WTC11 (cell line): ENCODE measurements at regions of chr6 and their contacts with region 1.

Region 1: DNA sequence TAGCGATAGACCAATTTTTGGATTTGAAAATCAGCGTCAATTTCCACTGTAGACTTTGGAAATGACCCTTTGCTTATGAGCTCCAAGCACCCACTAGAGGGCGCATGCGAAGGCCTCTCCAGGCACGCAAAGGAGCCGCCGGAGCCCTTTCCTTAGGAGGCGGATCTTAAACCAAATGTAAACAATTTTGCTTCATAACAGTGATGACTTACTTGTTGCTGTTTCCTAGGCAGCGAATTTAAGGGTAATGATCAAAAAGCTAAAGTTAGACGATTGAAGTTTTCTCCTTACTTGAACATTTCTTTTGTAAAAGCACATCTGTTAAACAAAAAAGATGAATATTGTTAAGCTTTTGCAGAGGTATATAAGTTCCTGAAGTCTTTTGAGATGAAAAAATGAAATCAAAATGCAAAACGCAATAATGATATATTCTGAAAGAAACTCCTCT is 29.2 kb upstream of the EXOC2 start:
- DNase-seq: peak; percentile 81
- ATAC-seq: peak; percentile 86
- H3K4me3 Mint-ChIP-seq: no peak overlapping the region
- H3K27ac Mint-ChIP-seq: no peak overlapping the region
- H3K4me1 Mint-ChIP-seq: peaks cover 11% of the 10 kb centered on the region
- H3K27me3 Mint-ChIP-seq: no peaks in the 10 kb centered on the region
- CTCF ChIP-seq: peak; percentile 78

Region 2: GRCh38 chr6:617445-618100 is 104.5 kb before region 1 on chr6:
- CTCF ChIA-PET with region 1: interaction called, 16 read pairs
- POLR2A ChIA-PET with region 1: no interaction called
- DNase-seq: peak; percentile 38
- ATAC-seq: peak; percentile 97
- H3K4me3 Mint-ChIP-seq: no peak overlapping the region
- H3K27ac Mint-ChIP-seq: no peak overlapping the region
- H3K4me1 Mint-ChIP-seq: peaks cover 7% of the 10 kb centered on the region
- H3K27me3 Mint-ChIP-seq: no peaks in the 10 kb centered on the region
- CTCF ChIP-seq: no peak

Region 3: GRCh38 chr6:692855-693722 is 29.0 kb before region 1 on chr6 and contains the start of gene EXOC2:
- CTCF ChIA-PET with region 1: interaction called, 15 read pairs
- POLR2A ChIA-PET with region 1: no interaction called
- DNase-seq: peak; percentile 90
- ATAC-seq: peak; percentile 83
- H3K4me3 Mint-ChIP-seq: peak within 1 kb of the TSS; percentile 92
- H3K27ac Mint-ChIP-seq: peak within 1 kb of the TSS; percentile 83
- H3K4me1 Mint-ChIP-seq: peaks cover 23% of the 10 kb centered on the region
- H3K27me3 Mint-ChIP-seq: no peaks in the 10 kb centered on the region
- CTCF ChIP-seq: no peak
- total RNA-seq, gene EXOC2: 39.6 to 45.7 TPM (median 40.2 TPM) in 3 replicates

Region 4: DNA sequence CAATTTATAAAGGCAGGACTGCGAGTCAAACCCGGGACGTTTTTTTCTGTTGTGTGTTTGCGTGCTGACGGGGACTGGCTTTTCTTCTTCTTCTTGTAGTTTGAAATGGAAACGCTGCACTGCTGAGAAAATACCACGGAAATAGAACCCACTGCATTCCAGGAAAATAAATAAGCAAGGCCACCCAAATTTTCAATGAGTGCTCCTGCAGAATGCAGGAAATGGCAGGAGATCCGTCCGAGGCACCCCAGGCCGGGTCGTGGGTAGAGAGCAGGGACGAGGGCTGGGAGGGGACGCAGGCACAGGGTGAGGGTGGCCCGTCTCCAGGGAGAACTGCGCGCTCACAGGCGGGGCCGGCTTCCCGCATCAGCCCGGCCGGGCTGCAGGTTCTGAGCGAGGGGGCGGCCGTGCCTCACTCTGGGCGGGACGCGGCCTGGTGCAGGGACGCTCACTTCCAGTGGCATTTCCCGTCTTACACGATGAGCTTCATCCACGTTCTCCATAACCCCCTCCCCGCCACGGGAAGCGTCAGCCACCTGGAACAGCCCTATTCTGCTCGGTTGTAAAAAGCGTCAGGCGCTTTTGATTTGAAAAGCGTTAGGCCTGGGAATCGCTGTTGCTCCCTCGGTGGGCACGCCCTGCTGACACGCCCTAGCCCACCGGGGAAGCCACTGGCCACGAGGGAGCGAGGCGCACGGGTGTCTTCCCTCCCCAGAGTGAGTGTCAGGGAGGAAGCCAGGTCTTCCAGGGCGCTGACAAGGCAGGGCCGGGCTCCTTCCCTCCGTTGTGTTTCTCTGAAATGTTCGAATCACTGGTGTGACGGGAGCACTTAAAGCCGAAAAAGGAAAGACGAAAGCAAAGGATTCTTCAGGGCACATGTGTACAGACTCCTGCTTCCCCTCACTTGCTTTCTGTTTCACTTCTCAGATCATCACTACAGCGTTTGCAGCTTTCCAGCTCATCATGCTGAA is 11.2 kb before region 1 on chr6:
- CTCF ChIA-PET with region 1: interaction called, 22 read pairs
- POLR2A ChIA-PET with region 1: no interaction called
- DNase-seq: peak; percentile 60
- ATAC-seq: peak; percentile 89
- H3K4me3 Mint-ChIP-seq: peak overlapping the region; percentile 86
- H3K27ac Mint-ChIP-seq: no peak overlapping the region
- H3K4me1 Mint-ChIP-seq: peaks cover 55% of the 10 kb centered on the region
- H3K27me3 Mint-ChIP-seq: peaks cover 14% of the 10 kb centered on the region
- CTCF ChIP-seq: no peak